Vagina (tissue), 2 donors: ENCODE measurements at regions of chr6 and their contacts with region 1.

Region 1: GRCh38 chr6:128339635-128340450 is 180.6 kb downstream of the PTPRK start:
- DNase-seq: no peak
- H3K4me3 ChIP-seq: no peak overlapping the region
- H3K27ac ChIP-seq: no peak overlapping the region
- H3K4me1 ChIP-seq: peaks cover 18% of the 10 kb centered on the region
- H3K27me3 ChIP-seq: no peaks in the 10 kb centered on the region
- CTCF ChIP-seq: no peak
- POLR2A ChIP-seq: no peak

Region 2: GRCh38 chr6:128784266-128784665 is 444.4 kb after region 1 on chr6:
- intact Hi-C with region 1: loop called (anchors 5 kb)
- DNase-seq: no peak
- H3K4me3 ChIP-seq: no peak overlapping the region
- H3K27ac ChIP-seq: no peak overlapping the region
- H3K4me1 ChIP-seq: no peaks in the 10 kb centered on the region
- H3K27me3 ChIP-seq: no peaks in the 10 kb centered on the region
- CTCF ChIP-seq: no peak
- POLR2A ChIP-seq: no peak